Activated CD8-positive, alpha-beta memory T cell treated with anti-CD3 and anti-CD28 coated beads, Interleukin-2, amount 10 ng/mL, durations not matched to agents 7 days and 5 days (primary cell): ENCODE measurements at regions of chr2 and their contacts with region 1.

Region 1: DNA sequence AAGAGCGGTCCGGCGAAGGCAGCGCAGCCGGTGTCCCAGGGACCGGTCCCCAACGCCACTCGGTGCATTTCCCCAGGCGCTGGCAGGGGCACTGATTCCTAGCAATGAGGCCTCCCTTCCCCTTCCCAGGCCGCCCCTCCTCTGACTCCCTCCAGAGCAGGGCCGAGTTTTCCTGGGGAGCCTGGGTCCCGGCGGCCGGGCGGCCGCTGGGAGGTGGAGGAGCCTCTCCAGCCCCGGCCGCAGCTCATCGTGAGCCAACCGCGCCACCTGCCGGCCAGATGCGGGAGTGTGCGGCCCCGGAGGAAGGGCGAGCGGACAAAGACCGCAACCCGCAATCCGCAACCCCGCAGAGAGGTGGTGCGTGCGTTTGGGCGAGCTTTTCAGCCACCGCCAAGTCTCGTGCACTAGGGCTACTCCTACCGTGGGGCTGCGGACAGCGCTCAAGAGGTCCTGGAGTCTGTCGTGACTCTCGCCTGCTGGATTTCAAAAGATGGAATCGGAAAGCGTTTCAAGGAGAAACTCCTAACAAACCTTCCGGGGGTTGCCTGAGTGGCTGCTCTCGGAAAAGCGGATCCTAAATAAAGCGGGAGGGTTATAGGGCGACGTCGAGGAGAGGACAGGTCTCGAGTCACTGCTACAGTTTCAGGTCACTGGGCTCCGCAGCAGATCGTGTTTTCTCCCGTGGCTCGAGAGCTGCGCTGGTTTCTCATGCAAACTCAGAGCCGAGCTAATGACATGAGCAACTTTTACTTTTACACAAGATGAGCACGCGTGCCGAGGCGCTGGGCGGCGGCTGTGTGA is 1.5 kb upstream of the EPHA4 start:
- DNase-seq: peak; percentile 78
- ATAC-seq: peak; percentile 56
- H3K4me3 Mint-ChIP-seq: peak overlapping the region; percentile 48
- H3K27ac Mint-ChIP-seq: no peak overlapping the region
- H3K4me1 Mint-ChIP-seq: peaks cover 26% of the 10 kb centered on the region
- H3K27me3 Mint-ChIP-seq: peaks cover 70% of the 10 kb centered on the region

Region 2: DNA sequence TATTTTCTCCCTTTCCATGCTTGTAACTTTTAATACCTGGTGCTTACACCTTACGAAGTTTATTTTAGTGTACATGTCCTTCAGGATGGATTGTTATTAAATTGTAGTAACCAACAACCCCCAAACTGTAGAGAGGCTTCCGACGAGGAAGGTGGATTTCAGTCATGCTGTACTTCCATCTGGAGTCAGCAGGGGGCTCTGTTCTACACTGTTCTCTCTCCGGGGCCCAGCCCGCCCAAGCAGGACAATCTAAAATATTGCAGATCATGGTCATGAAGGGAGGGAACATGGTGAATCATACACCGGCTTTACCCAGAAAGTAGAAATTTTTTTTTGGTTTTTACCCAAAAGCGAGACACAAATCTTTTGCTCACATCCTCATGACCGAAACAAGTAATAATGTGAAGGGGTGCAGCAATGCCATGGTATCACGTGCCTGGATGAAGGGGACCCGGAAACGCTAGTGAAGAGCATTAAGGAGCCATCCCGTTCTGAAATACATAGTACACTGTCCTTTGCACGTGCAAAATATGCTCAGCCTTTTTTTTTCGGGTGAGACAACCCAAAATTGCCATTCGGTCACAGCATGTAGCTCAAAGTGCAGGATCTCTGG is 886.3 kb before region 1 on chr2:
- CTCF ChIA-PET with region 1: interaction called, 20 read pairs
- DNase-seq: peak; percentile 60
- ATAC-seq: peak; percentile 63
- H3K4me3 Mint-ChIP-seq: no peak overlapping the region
- H3K27ac Mint-ChIP-seq: no peak overlapping the region
- H3K4me1 Mint-ChIP-seq: peaks cover 3% of the 10 kb centered on the region
- H3K27me3 Mint-ChIP-seq: peaks cover 2% of the 10 kb centered on the region

Region 3: GRCh38 chr2:221120643-221121042 is 453.0 kb before region 1 on chr2:
- CTCF ChIA-PET with region 1: no interaction called
- DNase-seq: no peak
- ATAC-seq: no peak
- H3K4me3 Mint-ChIP-seq: no peak overlapping the region
- H3K27ac Mint-ChIP-seq: no peak overlapping the region
- H3K4me1 Mint-ChIP-seq: no peaks in the 10 kb centered on the region
- H3K27me3 Mint-ChIP-seq: peaks cover 2% of the 10 kb centered on the region

Region 4: DNA sequence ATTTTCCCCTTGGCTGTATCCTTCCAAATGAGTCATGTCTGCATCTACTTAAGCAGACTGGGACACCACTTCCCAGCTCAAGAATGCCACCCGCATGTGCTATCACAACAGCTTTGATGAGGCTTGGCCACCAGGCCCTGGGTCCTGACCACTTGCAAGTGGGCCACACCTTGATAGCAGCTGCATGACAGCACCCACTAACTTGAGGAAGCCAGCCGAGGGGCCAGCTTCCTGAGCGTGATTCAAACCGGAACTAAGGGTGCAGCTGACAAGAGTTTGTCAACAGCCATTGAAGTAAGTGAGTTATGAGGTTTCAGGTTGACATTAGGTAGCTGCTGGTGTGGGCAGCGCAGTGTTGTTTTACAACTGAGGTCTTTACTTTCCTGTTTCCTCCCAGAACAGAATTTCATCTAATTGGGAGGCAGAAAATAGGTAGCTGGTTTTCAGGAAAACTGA is 55.9 kb before region 1 on chr2:
- CTCF ChIA-PET with region 1: interaction called, 14 read pairs
- DNase-seq: peak; percentile 92
- ATAC-seq: peak; percentile 86
- H3K4me3 Mint-ChIP-seq: no peak overlapping the region
- H3K27ac Mint-ChIP-seq: no peak overlapping the region
- H3K4me1 Mint-ChIP-seq: peaks cover 10% of the 10 kb centered on the region
- H3K27me3 Mint-ChIP-seq: no peaks in the 10 kb centered on the region